Prostate gland (tissue), 2 donors: ENCODE measurements at regions of chr10 and their contacts with region 1.

Region 1: GRCh38 chr10:11986593-11987216 is 55.9 kb downstream of the UPF2 start:
- DNase-seq: peak; percentile 76
- H3K4me3 ChIP-seq: no peak overlapping the region
- H3K27ac ChIP-seq: no peak overlapping the region
- H3K4me1 ChIP-seq: no peaks in the 10 kb centered on the region
- H3K27me3 ChIP-seq: no peaks in the 10 kb centered on the region
- CTCF ChIP-seq: peak; percentile 68 to 92 (median 90)
- POLR2A ChIP-seq: no peak

Region 2: GRCh38 chr10:11782793-11783557 is 203.7 kb before region 1 on chr10:
- intact Hi-C with region 1: loop called (anchors 5 kb)
- DNase-seq: peak; percentile 43
- H3K4me3 ChIP-seq: no peak overlapping the region
- H3K27ac ChIP-seq: no peak overlapping the region
- H3K4me1 ChIP-seq: no peaks in the 10 kb centered on the region
- H3K27me3 ChIP-seq: no peaks in the 10 kb centered on the region
- CTCF ChIP-seq: peak; percentile 58 to 87 (median 73)
- POLR2A ChIP-seq: no peak